Heart right ventricle (tissue), 16 donors: ENCODE measurements at regions of chr12 and their contacts with region 1.

Region 1: GRCh38 chr12:77685112-77685511 is 145.6 kb upstream of the NAV3 start:
- DNase-seq: peak in 1 of 2 donors; percentile 69
- ATAC-seq: peak in 6 of 8 donors; percentile 64 to 88 (median 70)
- H3K4me3 ChIP-seq: peak overlapping the region in 5 of 10 donors; percentile 2 to 13 (median 11)
- H3K27ac ChIP-seq: no peak overlapping the region
- H3K4me1 ChIP-seq: peaks cover 0 to 6% (median 0%) of the 10 kb centered on the region in 9 donors
- H3K27me3 ChIP-seq: no peaks in the 10 kb centered on the region
- CTCF ChIP-seq: peak; percentile 41 to 76 (median 58)

Region 2: GRCh38 chr12:77049767-77050353 is 635.3 kb before region 1 on chr12:
- intact Hi-C with region 1: loop called in 7 of 10 experiments (anchors 2 to 10 kb)
- DNase-seq: peak in 1 of 2 donors; percentile 23
- ATAC-seq: peak in 5 of 8 donors; percentile 55 to 78 (median 67)
- H3K4me3 ChIP-seq: no peak overlapping the region
- H3K27ac ChIP-seq: no peak overlapping the region
- H3K4me1 ChIP-seq: no peaks in the 10 kb centered on the region
- H3K27me3 ChIP-seq: no peaks in the 10 kb centered on the region
- CTCF ChIP-seq: peak; percentile 41 to 83 (median 73)

Region 3: GRCh38 chr12:77152623-77153193 is 532.4 kb before region 1 on chr12:
- intact Hi-C with region 1: loop called (anchors 2 to 5 kb)
- DNase-seq: no peak
- ATAC-seq: peak in 2 of 8 donors; percentile 47 to 75
- H3K4me3 ChIP-seq: no peak overlapping the region
- H3K27ac ChIP-seq: no peak overlapping the region
- H3K4me1 ChIP-seq: no peaks in the 10 kb centered on the region
- H3K27me3 ChIP-seq: no peaks in the 10 kb centered on the region
- CTCF ChIP-seq: peak; percentile 27 to 73 (median 63)